ENCODE measurements at regions of chr10 and their contacts with region 1.

Region 1: GRCh38 chr10:50508315-50509051 is 115.3 kb downstream of the SGMS1 start:
- DNase-seq: peak; percentile 50
- H3K4me3 Mint-ChIP-seq: no peak overlapping the region
- H3K27ac Mint-ChIP-seq: peak overlapping the region; percentile 10
- H3K4me1 Mint-ChIP-seq: peaks cover 89% of the 10 kb centered on the region
- H3K27me3 Mint-ChIP-seq: peaks cover 5% of the 10 kb centered on the region

Region 2: DNA sequence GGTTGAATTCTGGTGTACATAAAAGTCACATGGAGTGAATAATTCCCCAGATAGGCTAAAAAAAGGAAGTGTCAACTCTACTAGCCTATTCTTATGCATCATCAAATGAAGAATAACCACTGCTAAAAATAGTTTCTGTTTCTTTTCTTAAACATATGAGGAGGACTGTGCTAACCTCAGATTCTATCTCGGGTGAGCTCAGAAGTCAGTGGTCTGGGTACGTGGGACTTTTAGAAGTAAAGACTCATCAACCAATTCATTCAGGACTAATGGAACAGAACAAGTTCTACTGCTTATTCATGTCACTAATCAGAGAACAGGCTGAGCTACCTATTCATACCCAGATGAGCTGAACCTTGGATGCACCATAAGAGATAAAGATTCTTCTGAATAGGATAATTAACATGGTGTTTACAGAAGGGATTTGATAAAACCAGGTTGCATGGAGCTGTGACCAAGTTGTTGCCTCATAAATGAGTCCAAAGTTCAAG is 247.6 kb before region 1 on chr10:
- intact Hi-C with region 1: loop called (anchors 5 kb)
- DNase-seq: peak; percentile 22
- H3K4me3 Mint-ChIP-seq: no peak overlapping the region
- H3K27ac Mint-ChIP-seq: no peak overlapping the region
- H3K4me1 Mint-ChIP-seq: peaks cover 29% of the 10 kb centered on the region
- H3K27me3 Mint-ChIP-seq: peaks cover 60% of the 10 kb centered on the region

Region 3: GRCh38 chr10:50291261-50291850 is 217.1 kb before region 1 on chr10:
- intact Hi-C with region 1: no loop called
- DNase-seq: no peak
- H3K4me3 Mint-ChIP-seq: no peak overlapping the region
- H3K27ac Mint-ChIP-seq: no peak overlapping the region
- H3K4me1 Mint-ChIP-seq: peaks cover 3% of the 10 kb centered on the region
- H3K27me3 Mint-ChIP-seq: peaks cover 20% of the 10 kb centered on the region

Region 4: GRCh38 chr10:50396491-50397311 is 111.8 kb before region 1 on chr10:
- intact Hi-C with region 1: loop called (anchors 1 kb)
- DNase-seq: peak; percentile 44
- H3K4me3 Mint-ChIP-seq: peak overlapping the region; percentile 68
- H3K27ac Mint-ChIP-seq: peak overlapping the region; percentile 92
- H3K4me1 Mint-ChIP-seq: peaks cover 59% of the 10 kb centered on the region
- H3K27me3 Mint-ChIP-seq: no peaks in the 10 kb centered on the region

Region 5: GRCh38 chr10:50497757-50498156 is 10.7 kb before region 1 on chr10:
- intact Hi-C with region 1: loop called (anchors 1 kb)
- DNase-seq: no peak
- H3K4me3 Mint-ChIP-seq: no peak overlapping the region
- H3K27ac Mint-ChIP-seq: peak overlapping the region; percentile 69
- H3K4me1 Mint-ChIP-seq: peaks cover 51% of the 10 kb centered on the region
- H3K27me3 Mint-ChIP-seq: no peaks in the 10 kb centered on the region

Region 6: GRCh38 chr10:50540069-50540825 is 31.8 kb after region 1 on chr10:
- intact Hi-C with region 1: loop called (anchors 1 kb)
- DNase-seq: no peak
- H3K4me3 Mint-ChIP-seq: peak overlapping the region; percentile 9
- H3K27ac Mint-ChIP-seq: peak overlapping the region; percentile 83
- H3K4me1 Mint-ChIP-seq: peaks cover 72% of the 10 kb centered on the region
- H3K27me3 Mint-ChIP-seq: no peaks in the 10 kb centered on the region

Region 7: DNA sequence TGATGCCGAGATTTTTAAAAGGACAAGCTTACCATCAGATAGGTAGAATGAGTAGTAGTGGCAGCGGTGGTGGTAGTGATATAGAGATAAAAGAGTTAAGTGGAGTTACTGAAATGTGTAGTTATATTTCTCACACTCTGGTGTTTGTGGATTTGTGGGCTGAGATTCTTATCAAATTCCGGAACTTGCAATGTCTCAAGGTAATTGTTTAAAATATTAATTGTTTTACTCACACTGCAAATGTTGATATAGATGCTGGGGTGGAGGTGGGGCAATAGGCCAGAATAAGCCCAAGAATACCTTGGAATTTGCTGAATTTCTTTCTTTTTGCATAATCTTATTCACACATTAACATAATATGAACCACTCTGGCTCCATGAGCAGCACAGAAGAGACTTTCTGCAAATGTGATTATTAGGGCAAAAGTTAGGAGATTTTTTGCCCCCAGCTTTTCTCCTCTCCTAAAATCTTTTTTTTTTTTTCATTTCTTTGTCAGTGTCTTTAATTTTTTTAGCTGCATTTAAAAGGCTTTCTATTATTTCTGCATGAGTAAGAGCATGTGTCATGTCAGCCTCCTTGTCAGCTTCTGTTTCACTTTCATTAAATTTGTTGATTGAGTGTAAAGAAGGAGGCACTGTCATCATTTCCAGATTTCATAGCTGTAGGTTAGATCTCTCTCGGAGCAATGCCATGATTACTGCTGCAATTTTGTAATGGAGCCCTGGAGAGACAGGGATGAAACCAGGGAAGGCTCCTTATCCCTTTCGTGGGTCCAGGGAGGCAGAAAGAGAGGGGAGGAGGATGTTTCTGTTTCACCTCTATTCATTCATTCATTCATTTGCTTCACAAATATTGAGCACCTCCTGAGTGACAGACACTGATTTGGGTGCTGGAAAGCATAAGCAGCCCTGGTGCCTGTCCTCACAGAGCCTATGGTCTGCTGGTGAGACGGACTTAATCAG is 128.4 kb after region 1 on chr10:
- intact Hi-C with region 1: loop called (anchors 1 kb)
- DNase-seq: peak; percentile 35
- H3K4me3 Mint-ChIP-seq: peak overlapping the region; percentile 45
- H3K27ac Mint-ChIP-seq: peak overlapping the region; percentile 35
- H3K4me1 Mint-ChIP-seq: peaks cover 27% of the 10 kb centered on the region
- H3K27me3 Mint-ChIP-seq: peaks cover 72% of the 10 kb centered on the region